Posterior vena cava (tissue), 2 donors: ENCODE measurements at regions of chr10 and their contacts with region 1.

Region 1: DNA sequence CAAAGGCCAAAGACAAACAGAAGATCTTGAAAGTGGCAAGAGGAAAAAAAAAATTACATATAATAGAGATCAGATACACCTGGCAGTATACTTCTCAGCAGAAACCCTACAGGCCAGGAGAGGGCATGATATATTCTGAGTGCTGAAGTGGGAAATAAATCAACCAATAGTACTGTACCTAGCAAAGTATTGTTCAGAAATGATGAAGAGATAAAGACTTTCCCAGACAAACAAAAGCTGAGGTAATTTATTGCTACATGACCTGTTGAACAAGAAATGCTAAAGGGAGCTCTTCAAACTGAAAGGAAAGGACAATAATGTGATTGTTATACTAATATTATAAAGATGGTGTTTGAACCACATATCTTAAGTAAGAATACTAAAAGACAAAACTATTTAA is 291.9 kb downstream of the SH2D4B start:
- DNase-seq: no peak

Region 2: GRCh38 chr10:81104494-81104893 is 274.9 kb after region 1 on chr10:
- intact Hi-C with region 1: no loop called
- DNase-seq: no peak

Region 3: DNA sequence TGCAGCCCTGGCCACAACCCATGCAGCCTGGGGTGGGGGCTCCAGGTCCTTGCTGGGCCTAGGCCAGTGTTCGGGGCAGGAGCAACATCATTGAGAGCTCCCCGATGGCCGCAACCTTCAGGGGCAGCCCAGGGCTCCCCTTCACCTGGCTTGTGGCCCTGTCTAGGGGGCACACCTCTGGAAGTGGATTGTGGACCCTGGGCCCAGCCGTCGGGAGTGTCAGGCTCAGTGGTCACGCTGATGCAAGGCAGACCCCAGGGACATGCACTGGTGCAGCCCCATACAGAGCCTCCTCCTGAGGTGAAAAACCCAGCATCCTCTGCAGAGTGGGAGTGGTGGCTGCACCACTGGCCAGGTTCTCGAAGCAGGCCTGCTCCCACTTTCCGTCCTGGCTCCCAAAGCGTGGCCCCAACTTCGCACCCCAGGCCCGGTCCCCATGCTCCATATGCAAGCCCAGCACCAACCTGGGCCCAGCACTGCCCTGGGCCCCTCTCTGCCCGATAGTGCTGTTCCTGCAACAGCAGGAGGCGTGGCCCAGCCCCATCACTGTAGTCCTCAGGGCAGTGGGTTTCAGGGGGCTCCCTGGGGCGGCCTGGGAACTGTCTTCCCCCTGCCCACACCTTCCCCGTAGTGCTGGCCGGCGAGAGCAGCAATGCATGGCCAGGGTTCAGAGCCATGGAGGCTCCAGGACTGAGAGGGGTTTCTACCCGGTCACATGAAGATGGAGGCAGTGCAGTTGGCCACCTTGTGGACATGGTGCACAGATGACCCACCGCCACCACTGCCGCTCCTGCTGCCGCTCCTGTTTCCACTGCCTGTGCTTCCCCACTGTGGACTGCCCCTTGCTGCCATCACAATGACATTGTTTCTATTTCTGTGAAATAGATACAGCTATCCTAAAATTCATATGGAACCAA is 741.5 kb after region 1 on chr10:
- intact Hi-C with region 1: loop called in 1 of 2 experiments (anchors 10 kb)
- DNase-seq: no peak